ENCODE measurements at regions of chr1 and their contacts with region 1.

Region 1: GRCh38 chr1:200669314-200670241 is at the start of gene DDX59:
- H3K4me3 ChIP-seq: peak within 1 kb of the TSS; percentile 98
- H3K27ac ChIP-seq: peak within 1 kb of the TSS; percentile 98
- H3K4me1 ChIP-seq: peaks cover 3% of the 10 kb centered on the region; the same call in 1 of the 2 replicates
- CTCF ChIP-seq: peak; percentile 45

Region 2: GRCh38 chr1:200620273-200621131 is 49.1 kb before region 1 on chr1 and contains the start of gene KIF14:
- CTCF ChIA-PET with region 1: interaction called, 12 read pairs
- POLR2A ChIA-PET with region 1: interaction called, 10 read pairs
- H3K4me3 ChIP-seq: peak within 1 kb of the TSS; percentile 94
- H3K27ac ChIP-seq: peak within 1 kb of the TSS; percentile 19; the same call in 1 of the 2 replicates
- H3K4me1 ChIP-seq: no peaks in the 10 kb centered on the region
- CTCF ChIP-seq: peak; percentile 12; the same call in 1 of the 2 replicates

Region 3: GRCh38 chr1:200659269-200659668 is 10.3 kb before region 1 on chr1:
- CTCF ChIA-PET with region 1: interaction called, 3 read pairs
- POLR2A ChIA-PET with region 1: interaction called, 13 read pairs
- H3K4me3 ChIP-seq: no peak overlapping the region
- H3K27ac ChIP-seq: no peak overlapping the region
- H3K4me1 ChIP-seq: no peaks in the 10 kb centered on the region
- CTCF ChIP-seq: no peak

Region 4: GRCh38 chr1:200738740-200739498 is 69.3 kb after region 1 on chr1 and contains the start of gene CAMSAP2:
- CTCF ChIA-PET with region 1: interaction called, 4 read pairs
- POLR2A ChIA-PET with region 1: interaction called, 35 read pairs
- H3K4me3 ChIP-seq: peak within 1 kb of the TSS; percentile 94
- H3K27ac ChIP-seq: peak within 1 kb of the TSS; percentile 93
- H3K4me1 ChIP-seq: peaks cover 8% of the 10 kb centered on the region; the same call in 1 of the 2 replicates
- CTCF ChIP-seq: no peak

Region 5: DNA sequence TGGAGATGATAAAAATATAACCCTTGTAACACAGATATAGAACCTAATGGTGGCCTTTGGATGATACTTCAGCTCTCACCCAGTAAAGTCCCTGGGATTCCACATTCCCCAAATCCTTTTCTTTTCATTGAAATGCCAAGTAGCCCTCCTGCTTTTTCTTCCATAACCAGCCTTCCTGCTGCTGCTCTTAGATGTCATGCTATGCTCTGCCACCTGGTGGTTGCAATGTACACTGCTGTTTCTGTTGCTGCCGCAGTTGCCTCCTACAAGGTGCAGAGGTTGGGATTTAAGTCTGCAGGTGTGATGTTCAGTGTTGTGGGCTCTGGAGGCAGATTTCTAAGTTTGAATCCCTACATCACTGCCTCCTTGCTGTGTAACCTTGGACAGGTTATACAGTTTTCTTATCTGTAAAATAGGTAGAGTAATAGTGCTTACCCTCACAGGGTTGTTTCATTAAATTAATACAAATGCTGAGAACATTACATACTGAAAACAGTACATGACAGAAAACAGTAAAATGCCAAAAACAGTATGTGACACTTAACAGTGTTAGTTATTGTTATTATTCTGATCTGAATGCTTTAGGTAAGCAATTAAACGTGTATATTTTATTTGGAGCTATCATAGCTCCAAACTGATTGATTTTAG is 133.4 kb after region 1 on chr1:
- CTCF ChIA-PET with region 1: interaction called, 11 read pairs
- POLR2A ChIA-PET with region 1: no interaction called
- H3K4me3 ChIP-seq: no peak overlapping the region
- H3K27ac ChIP-seq: no peak overlapping the region
- H3K4me1 ChIP-seq: no peaks in the 10 kb centered on the region
- CTCF ChIP-seq: peak; percentile 63; the same call in 1 of the 2 replicates